Activated CD4-positive, alpha-beta memory T cell treated with anti-CD3 and anti-CD28 coated beads, Interleukin-2, amount 10 ng/mL, durations not matched to agents 7 days and 5 days (primary cell): ENCODE measurements at regions of chr11 and their contacts with region 1.

Region 1: GRCh38 chr11:118240999-118241768 is 11.0 kb downstream of the MPZL3 start:
- DNase-seq: peak; percentile 74
- H3K4me3 Mint-ChIP-seq: peak overlapping the region; percentile 67
- H3K27ac Mint-ChIP-seq: peak overlapping the region; percentile 93
- H3K4me1 Mint-ChIP-seq: peaks cover 90% of the 10 kb centered on the region
- H3K27me3 Mint-ChIP-seq: no peaks in the 10 kb centered on the region

Region 2: DNA sequence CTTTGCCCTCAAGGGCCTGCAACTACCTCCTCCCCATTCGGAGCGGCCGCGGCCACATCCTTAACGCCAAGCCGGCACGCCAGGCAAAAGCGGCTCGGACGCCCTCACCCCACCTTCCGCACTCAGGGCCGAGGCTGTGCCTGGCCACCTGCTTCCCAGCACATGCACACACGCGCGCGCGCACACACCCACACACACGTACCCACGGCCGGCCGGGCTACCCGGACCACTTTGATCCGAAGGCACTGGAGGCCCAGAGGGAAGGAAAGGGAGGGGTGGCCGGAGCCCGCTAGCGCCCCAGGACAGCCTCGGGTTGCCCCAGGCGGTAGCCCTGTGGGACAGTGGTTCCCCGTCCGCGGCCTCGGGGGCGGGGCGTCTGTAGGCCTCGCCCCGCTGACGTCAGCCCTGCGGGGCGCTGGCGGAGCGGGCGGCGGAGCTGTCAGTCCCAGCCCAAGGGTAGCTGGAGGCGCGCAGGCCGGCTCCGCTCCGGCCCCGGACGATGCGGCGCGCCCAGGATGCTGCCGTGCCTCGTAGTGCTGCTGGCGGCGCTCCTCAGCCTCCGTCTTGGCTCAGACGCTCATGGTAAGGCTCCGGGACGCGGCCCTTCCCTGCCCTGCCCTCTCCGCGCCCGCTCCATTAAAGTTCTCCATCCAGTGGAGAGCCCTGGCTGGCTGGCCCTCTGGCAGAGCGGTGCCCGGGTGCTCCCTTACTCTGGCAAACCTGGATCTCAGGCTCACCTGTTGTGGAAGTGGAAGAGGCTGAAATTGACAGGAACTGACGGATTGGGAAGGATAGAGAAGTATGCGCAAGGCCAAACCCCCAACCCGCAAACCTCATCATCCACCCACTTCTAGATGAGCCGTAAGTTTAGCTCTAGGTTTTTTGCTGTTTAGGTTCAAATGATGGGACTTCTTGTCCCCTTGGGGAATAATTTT is 255.0 kb before region 1 on chr11 and contains the start of gene IL10RA:
- CTCF ChIA-PET with region 1: no interaction called
- POLR2A ChIA-PET with region 1: no interaction called
- DNase-seq: peak; percentile 90
- H3K4me3 Mint-ChIP-seq: peak within 1 kb of the TSS; percentile 89
- H3K27ac Mint-ChIP-seq: peak within 1 kb of the TSS; percentile 85
- H3K4me1 Mint-ChIP-seq: peaks cover 61% of the 10 kb centered on the region
- H3K27me3 Mint-ChIP-seq: no peaks in the 10 kb centered on the region
- total RNA-seq, gene IL10RA: 286 to 291 TPM

Region 3: DNA sequence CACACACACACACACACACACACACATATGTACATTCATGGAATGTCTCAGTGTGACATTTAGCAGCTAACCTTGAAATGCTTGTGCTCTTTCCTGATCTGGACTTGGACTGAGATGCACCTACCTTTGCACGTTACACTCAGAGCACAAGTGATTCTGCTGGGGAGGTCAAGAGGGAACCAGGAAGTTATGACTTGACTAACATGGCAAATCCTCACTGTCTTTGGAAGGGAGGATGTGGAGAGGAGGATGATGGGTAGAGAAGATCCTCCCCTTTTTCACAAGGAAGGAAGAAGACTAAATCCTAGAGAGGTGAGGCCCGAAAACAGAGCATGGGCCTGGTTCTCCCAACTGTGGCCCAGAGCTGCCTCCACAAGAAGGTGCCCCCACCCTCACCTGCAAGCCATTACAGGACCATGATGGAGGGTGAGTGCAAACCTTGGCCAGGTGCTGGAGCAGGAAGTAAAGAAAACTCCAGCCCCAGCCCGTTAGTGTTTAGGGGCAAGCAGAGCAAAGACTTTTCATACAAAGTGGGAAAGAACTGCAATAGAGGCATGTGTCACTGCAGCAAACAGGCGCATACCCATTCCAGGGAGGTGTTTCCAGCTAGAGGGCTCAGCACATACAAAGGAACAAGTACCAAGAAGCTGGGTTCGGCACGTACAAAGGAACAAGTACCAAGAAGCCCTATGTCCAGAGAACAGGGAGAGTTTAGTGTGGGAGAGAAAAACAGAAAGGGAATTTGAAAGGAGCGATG is 114.9 kb before region 1 on chr11:
- CTCF ChIA-PET with region 1: no interaction called
- POLR2A ChIA-PET with region 1: no interaction called
- DNase-seq: no peak
- H3K4me3 Mint-ChIP-seq: no peak overlapping the region
- H3K27ac Mint-ChIP-seq: no peak overlapping the region
- H3K4me1 Mint-ChIP-seq: peaks cover 5% of the 10 kb centered on the region
- H3K27me3 Mint-ChIP-seq: peaks cover 21% of the 10 kb centered on the region

Region 4: GRCh38 chr11:118211006-118211405 is 30.2 kb before region 1 on chr11:
- CTCF ChIA-PET with region 1: interaction called, 4 read pairs
- POLR2A ChIA-PET with region 1: interaction called, 16 read pairs
- DNase-seq: no peak
- H3K4me3 Mint-ChIP-seq: no peak overlapping the region
- H3K27ac Mint-ChIP-seq: no peak overlapping the region
- H3K4me1 Mint-ChIP-seq: peaks cover 80% of the 10 kb centered on the region
- H3K27me3 Mint-ChIP-seq: no peaks in the 10 kb centered on the region

Region 5: DNA sequence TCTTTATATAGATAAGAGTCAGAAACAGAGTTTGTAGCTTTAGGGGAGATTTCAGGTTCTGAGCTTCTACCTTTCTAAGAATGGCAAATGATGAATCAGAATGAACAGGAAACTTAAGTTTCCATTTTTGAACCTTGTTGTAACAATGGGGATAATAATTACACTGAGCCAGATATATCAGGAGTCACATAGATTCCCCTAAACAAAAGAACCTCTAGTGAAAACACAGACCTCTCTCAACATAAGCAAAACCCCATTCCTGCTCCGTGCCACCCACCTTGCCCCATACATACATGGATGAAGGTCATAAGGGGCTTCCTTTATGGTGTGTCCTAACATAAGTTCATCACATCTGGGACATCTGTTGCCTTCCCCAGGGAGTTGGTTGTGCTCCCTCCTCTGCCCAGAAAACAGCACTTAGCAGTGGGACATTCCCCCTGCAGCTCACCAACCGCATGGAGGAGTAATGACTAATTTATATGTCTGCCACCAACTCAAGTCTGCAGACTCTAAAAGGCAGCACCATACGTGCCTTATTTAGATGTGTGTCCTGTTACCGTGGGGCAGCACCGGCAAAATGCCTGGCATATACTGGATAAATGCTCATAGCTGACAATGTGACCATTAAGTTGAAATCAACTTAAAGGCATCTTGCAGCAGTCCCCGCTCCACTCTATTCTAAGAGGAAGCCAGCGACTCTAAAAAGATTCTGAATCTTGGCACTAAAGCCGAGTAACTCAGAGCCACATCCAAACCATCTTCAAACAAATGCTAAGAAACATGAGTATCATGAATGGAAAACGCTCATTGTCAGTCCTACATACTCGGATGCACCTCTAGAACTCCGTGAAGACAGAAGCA is 24.3 kb before region 1 on chr11:
- CTCF ChIA-PET with region 1: interaction called, 4 read pairs
- POLR2A ChIA-PET with region 1: interaction called, 96 read pairs
- DNase-seq: peak; percentile 57
- H3K4me3 Mint-ChIP-seq: peak overlapping the region; percentile 74
- H3K27ac Mint-ChIP-seq: peak overlapping the region; percentile 94
- H3K4me1 Mint-ChIP-seq: peaks cover 96% of the 10 kb centered on the region
- H3K27me3 Mint-ChIP-seq: no peaks in the 10 kb centered on the region

Region 6: GRCh38 chr11:118227865-118228785 is 13.1 kb before region 1 on chr11:
- CTCF ChIA-PET with region 1: interaction called, 8 read pairs
- POLR2A ChIA-PET with region 1: interaction called, 96 read pairs
- DNase-seq: peak; percentile 63
- H3K4me3 Mint-ChIP-seq: peak overlapping the region; percentile 43
- H3K27ac Mint-ChIP-seq: no peak overlapping the region
- H3K4me1 Mint-ChIP-seq: peaks cover 31% of the 10 kb centered on the region
- H3K27me3 Mint-ChIP-seq: no peaks in the 10 kb centered on the region

Region 7: GRCh38 chr11:118251858-118252652 is 10.9 kb after region 1 on chr11 and contains the start of gene MPZL3:
- CTCF ChIA-PET with region 1: interaction called, 6 read pairs
- POLR2A ChIA-PET with region 1: interaction called, 54 read pairs
- DNase-seq: peak; percentile 82
- H3K4me3 Mint-ChIP-seq: peak within 1 kb of the TSS; percentile 93
- H3K27ac Mint-ChIP-seq: peak within 1 kb of the TSS; percentile 93
- H3K4me1 Mint-ChIP-seq: peaks cover 44% of the 10 kb centered on the region
- H3K27me3 Mint-ChIP-seq: no peaks in the 10 kb centered on the region
- total RNA-seq, gene MPZL3: 34.0 to 34.9 TPM

Region 8: GRCh38 chr11:118634431-118635236 is 393.4 kb after region 1 on chr11:
- CTCF ChIA-PET with region 1: no interaction called
- POLR2A ChIA-PET with region 1: no interaction called
- DNase-seq: no peak
- H3K4me3 Mint-ChIP-seq: no peak overlapping the region
- H3K27ac Mint-ChIP-seq: no peak overlapping the region
- H3K4me1 Mint-ChIP-seq: no peaks in the 10 kb centered on the region
- H3K27me3 Mint-ChIP-seq: peaks cover 2% of the 10 kb centered on the region